Cardiac septum (tissue), 1 donor: ENCODE measurements at regions of chr2 and their contacts with region 1.

Region 1: DNA sequence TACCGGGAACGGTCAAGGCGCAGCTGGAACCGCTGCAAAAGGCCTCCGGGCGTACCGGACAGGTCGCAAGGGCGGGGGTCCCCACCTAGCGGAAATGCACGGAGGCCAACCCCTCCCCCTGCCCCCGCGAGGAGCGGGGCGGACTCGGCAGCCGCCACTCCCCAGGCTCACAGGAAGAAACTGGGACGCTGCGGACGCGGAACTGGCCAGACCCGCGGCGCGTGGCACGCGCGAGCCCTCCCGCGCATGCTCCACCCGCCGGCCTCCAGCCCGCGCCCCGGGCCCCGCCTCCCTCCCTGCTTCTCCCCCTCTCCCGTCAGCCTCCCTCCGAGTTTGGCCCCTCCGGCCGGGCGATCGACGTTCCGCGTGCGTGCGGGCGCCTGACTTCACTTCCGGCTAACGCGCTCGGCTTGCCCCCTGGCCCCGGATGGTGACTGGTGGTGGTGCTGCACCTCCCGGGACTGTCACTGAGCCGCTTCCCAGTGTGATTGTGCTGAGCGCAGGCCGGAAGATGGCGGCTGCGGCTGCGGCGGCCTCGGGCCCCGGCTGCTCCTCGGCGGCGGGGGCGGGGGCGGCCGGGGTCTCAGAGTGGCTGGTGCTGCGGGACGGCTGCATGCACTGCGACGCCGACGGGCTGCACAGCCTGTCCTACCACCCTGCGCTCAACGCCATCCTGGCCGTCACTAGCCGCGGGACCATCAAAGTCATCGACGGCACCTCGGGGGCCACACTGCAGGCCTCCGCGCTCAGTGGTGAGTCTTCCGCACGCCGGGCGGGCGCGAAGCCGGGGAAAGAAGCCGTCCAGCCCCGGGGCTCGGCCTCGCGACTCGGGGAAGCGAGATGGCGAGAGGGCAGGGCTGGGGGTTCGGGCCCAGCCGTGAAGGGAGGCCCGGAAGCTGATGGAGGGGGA is at the start of gene BIRC6:
- DNase-seq: peak; percentile 99
- total RNA-seq, gene BIRC6: 57.0 TPM

Region 2: DNA sequence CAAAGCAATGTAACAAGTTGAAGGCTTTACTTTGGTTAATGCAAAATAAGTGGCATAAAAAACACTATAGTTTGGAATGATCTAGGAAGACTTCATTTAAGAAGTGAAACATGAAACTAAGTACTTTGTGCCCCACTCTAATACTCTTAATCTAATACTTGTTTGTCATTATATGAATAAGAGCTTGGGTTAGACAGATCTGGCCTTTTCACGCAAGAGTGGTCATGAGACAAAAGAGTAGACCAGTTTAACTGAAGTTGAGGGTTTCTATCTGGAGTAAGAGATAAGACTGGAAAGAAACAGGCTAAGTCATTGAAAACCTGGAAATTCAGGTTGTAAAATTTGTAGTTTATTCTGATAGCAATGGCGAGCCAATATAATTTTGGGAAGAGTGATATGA is 188.5 kb before region 1 on chr2:
- intact Hi-C with region 1: loop called (anchors 2 kb)
- DNase-seq: no peak

Region 3: GRCh38 chr2:32277674-32278482 is 79.1 kb before region 1 on chr2 and contains the start of gene YIPF4:
- intact Hi-C with region 1: loop called (anchors 2 kb)
- DNase-seq: peak; percentile 93
- total RNA-seq, gene YIPF4: 71.2 TPM